T-cell (primary cell): ENCODE measurements at regions of chr9 and their contacts with region 1.

Region 1: DNA sequence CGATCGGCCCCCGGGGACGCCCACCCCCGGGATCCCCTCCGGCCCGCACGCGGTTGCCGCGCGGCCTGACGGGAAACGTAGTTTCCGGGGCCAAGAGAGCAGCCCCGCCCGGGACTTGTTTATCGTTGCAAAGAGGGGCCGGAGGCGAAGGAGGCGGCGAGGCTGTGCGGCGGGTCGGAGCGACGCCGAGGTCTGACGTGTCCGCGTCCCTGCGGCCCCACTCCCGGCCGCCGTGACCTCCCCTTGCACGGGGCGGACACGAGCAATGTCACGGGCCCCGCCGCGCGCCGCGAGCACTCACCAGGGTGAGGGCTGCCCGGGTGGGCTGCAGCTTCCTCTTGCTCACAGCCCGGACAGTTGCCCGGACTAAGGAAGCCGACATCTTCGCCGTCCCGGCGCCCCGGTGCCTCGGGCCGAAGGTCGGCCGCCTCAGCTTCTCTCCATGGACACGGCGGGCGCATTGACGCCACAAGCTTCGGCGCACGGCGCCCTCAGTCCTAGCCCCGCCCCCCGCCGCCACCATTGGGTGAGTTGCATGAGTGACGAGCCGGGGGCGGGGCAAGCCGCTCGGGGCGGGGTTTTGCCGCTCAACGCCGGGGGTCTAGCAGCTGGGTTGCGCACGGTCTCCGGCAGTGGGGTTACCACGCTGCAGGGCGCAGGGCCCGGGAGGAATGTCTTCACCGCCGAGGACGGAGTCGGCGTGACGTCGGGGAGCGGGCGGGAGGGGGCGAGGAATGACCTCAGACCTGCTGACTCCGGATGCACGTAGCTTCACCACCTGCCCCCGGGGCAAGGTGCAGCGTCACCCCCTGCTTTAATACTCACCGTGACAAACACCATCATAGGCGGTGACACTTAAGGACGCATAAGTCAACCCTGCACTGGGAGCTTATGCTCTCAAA is at the start of gene ISCA1:
- DNase-seq: peak; percentile 97 to 100 (median 99)
- ATAC-seq: peak; percentile 84 to 92 (median 88)
- H3K4me3 ChIP-seq: peak within 1 kb of the TSS; percentile 65 to 82
- H3K4me3 Mint-ChIP-seq: peak within 1 kb of the TSS; percentile 90 to 95 (median 94)
- H3K27ac ChIP-seq: peak within 1 kb of the TSS; percentile 90
- H3K27ac Mint-ChIP-seq: peak within 1 kb of the TSS; percentile 93 to 97
- H3K4me1 ChIP-seq: peaks cover 5 to 23% of the 10 kb centered on the region in 2 experiments
- H3K4me1 Mint-ChIP-seq: peaks cover 39 to 49% (median 44%) of the 10 kb centered on the region in 3 donors
- H3K27me3 ChIP-seq: no peaks in the 10 kb centered on the region
- H3K27me3 Mint-ChIP-seq: no peaks in the 10 kb centered on the region
- total RNA-seq, gene ISCA1: 30.9 to 69.9 (median 34.5) TPM

Region 2: GRCh38 chr9:85949586-85950335 is 332.6 kb before region 1 on chr9:
- CTCF ChIA-PET with region 1: no interaction called
- POLR2A ChIA-PET with region 1: interaction called in 1 of 2 experiments, 15 read pairs
- DNase-seq: no peak
- ATAC-seq: no peak
- H3K4me3 ChIP-seq: no peak overlapping the region
- H3K4me3 Mint-ChIP-seq: no peak overlapping the region
- H3K27ac ChIP-seq: no peak overlapping the region
- H3K27ac Mint-ChIP-seq: no peak overlapping the region
- H3K4me1 ChIP-seq: no peaks in the 10 kb centered on the region
- H3K4me1 Mint-ChIP-seq: peaks cover 36 to 52% (median 49%) of the 10 kb centered on the region in 3 donors
- H3K27me3 ChIP-seq: no peaks in the 10 kb centered on the region
- H3K27me3 Mint-ChIP-seq: no peaks in the 10 kb centered on the region